Activated CD4-positive, alpha-beta T cell treated with anti-CD3 and anti-CD28 coated beads, Interleukin-2, amount 10 ng/mL, durations not matched to agents 24 days and 14 days (primary cell): ENCODE measurements at regions of chr5 and their contacts with region 1.

Region 1: GRCh38 chr5:115544436-115545350 is at the start of gene FEM1C:
- DNase-seq: peak; percentile 97
- H3K4me3 Mint-ChIP-seq: peak within 1 kb of the TSS; percentile 99
- H3K27ac Mint-ChIP-seq: peak within 1 kb of the TSS; percentile 100
- H3K4me1 Mint-ChIP-seq: peaks cover 38% of the 10 kb centered on the region
- H3K27me3 Mint-ChIP-seq: no peaks in the 10 kb centered on the region
- total RNA-seq, gene FEM1C: 13.9 and 14.6 TPM in 2 replicates

Region 2: DNA sequence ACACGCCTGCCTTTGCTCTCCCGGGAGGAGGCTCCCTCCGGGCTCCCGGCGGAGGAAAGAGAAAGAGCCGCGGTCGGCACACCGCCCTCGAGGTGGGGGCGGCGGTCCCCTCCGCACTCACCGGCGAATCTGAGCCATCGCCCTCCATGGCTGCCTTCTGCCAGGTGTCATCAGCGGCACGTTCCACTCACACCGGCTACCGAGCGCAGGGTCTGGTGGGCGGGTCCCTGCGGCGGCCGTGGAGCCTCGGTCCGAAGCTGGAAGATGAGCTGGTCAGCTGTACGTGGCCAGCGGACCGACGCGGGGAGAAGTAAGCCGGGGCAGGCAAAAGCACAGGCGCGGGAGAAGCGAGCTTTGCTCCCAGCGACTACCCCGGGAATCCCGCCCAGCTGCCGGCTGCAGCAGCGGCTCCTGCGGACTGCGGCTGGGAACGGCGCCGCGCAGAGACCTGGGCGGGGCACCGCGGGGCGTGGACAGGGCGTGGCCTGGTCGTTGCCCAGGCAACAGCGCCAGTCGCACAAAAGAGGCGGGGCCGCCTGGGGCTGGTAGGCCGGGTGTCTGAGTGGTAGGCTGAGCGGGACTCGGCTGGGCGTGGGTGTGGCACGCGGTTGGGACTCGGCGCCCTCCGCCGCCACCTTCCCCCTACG is 375.1 kb before region 1 on chr5 and contains the start of gene TRIM36:
- intact Hi-C with region 1: loop called (anchors 10 kb)
- DNase-seq: peak; percentile 98
- H3K4me3 Mint-ChIP-seq: peak within 1 kb of the TSS; percentile 86
- H3K27ac Mint-ChIP-seq: peak within 1 kb of the TSS; percentile 75
- H3K4me1 Mint-ChIP-seq: peaks cover 14% of the 10 kb centered on the region
- H3K27me3 Mint-ChIP-seq: peaks cover 63% of the 10 kb centered on the region
- total RNA-seq, gene TRIM36: 0.12 TPM in 1 of 2 replicates, not detected in the other

Region 3: DNA sequence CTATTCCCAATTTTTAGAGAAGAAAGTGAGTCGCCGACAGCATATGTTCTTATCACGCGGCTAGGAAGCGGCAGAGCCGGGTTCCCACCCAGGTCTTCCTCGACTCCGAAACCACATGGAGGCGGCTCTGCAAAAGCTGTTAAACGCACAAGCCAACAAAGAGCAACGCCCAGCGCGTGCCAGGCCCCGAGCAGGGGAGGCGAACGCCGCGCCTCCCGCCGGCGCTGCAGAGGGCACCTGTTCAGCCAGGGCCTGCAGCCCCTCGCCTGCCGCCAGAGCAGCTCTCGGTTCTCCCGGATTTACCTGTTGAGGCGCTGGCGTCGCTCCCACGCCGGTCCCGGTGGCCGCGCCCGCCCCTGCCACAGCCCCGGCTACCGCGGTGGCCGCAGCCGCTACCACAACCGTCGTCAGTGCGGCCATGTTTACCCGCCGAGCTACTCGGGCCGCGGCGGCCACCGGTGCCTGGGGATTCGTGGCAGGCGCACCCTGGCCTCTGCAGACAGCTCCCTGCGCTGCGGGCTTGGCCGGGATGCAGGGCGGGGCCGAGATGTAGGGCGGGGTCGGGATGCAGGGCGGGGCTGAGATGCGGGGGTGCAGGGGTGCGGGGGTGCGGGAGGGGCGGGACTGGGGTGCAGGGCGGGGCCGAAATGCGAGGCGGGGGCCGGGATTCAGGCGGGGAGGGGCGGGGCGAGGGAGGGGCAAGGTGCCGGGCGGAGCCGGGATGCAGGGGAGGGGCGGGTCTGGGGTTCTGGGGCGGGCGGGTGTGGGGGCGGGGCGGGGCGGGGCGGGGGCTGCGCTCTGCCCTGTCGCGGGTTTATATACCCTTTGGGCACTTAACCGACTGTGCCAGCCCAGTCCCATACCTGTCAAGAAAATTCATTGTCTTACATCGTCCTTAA is 248.3 kb before region 1 on chr5 and contains the start of gene CCDC112:
- intact Hi-C with region 1: loop called (anchors 1 kb)
- DNase-seq: peak; percentile 87
- H3K4me3 Mint-ChIP-seq: peak within 1 kb of the TSS; percentile 85
- H3K27ac Mint-ChIP-seq: no peak within 1 kb of the TSS
- H3K4me1 Mint-ChIP-seq: peaks cover 4% of the 10 kb centered on the region
- H3K27me3 Mint-ChIP-seq: peaks cover 59% of the 10 kb centered on the region
- total RNA-seq, gene CCDC112: 0.31 and 0.49 TPM in 2 replicates

Region 4: GRCh38 chr5:115487756-115488155 is 56.9 kb before region 1 on chr5:
- intact Hi-C with region 1: loop called (anchors 1 kb)
- DNase-seq: no peak
- H3K4me3 Mint-ChIP-seq: no peak overlapping the region
- H3K27ac Mint-ChIP-seq: peak overlapping the region; percentile 50
- H3K4me1 Mint-ChIP-seq: peaks cover 8% of the 10 kb centered on the region
- H3K27me3 Mint-ChIP-seq: peaks cover under 1% of the 10 kb centered on the region

Region 5: DNA sequence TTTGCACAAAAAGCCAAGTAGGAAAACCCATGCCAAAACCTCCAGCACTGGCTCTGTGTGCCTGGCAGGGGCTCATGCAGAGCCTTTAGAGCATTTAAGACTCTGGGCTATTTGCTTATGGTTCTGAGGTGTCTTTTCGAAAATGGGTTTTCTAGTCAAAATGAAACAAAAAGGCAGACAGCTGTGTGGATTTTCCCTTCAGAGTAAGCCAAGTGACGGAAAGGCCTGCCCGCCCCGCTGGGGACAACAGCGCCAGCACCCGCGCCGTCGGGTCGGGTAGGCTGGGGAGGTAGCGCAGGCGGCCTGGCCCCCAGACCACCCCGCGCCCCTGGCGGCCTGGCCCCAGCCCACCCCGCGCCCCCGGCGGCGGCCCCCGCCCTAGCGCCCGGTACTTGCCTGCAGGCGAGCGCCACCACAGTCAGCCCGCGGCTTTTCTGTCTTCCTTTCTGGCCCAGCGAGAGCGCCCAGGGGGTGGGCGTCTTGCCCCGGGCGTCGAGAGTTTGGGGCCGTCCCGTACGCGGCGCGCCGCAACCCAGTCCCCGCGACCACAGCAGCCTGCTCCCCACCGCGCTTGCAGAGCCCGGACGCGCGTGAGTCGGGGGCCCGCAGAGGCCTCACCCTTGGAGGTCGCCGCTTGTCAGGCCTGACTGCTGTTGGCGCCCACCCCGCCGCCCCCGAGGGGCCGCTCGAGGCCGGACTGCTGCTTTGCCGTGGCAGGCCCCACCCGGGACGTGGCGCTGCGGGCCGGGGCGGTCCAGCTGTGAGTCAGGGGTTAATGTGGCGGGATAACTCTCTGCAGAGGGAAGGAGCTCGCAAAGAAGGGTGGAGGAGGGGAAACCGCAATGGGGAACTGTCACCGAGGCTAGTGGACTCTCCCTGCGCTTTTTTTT is 57.3 kb after region 1 on chr5 and contains the start of gene TICAM2:
- intact Hi-C with region 1: loop called (anchors 1 kb)
- DNase-seq: peak; percentile 90
- H3K4me3 Mint-ChIP-seq: peak within 1 kb of the TSS; percentile 47
- H3K27ac Mint-ChIP-seq: peak within 1 kb of the TSS; percentile 62
- H3K4me1 Mint-ChIP-seq: peaks cover 25% of the 10 kb centered on the region
- H3K27me3 Mint-ChIP-seq: no peaks in the 10 kb centered on the region
- total RNA-seq, gene TICAM2: 0.86 and 1.0 TPM in 2 replicates